ENCODE measurements at regions of chr18 and their contacts with region 1.

Region 1: GRCh38 chr18:53380063-53380639 is 844.3 kb downstream of the MBD2 start:
- DNase-seq: peak; percentile 77
- H3K4me3 ChIP-seq: no peak overlapping the region
- H3K27ac ChIP-seq: no peak overlapping the region
- H3K4me1 ChIP-seq: peaks cover 7% of the 10 kb centered on the region
- H3K27me3 ChIP-seq: no peaks in the 10 kb centered on the region
- CTCF ChIP-seq: peak; percentile 77

Region 2: DNA sequence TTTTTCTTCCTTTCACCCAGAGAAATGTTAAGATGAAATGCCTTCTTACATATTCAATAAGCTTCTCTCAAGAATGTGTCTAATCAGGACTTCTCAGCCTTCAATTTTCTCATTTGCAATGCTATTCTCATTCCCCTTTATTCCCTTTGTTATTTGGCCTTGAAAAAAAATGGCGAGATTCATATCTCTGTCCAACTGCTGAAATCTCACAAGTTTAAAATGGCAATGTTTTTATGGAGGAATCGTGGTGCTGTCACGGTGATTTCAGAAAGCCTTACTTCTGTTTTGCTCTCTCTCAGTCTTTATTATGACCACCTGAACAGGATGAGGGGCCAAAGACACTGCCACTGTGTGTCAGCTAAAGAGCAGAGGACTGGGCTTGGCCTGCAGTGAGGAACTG is 111.7 kb before region 1 on chr18:
- CTCF ChIA-PET with region 1: no interaction called
- POLR2A ChIA-PET with region 1: interaction called, 15 read pairs
- intact Hi-C with region 1: no loop called
- DNase-seq: peak; percentile 16
- H3K4me3 ChIP-seq: no peak overlapping the region
- H3K27ac ChIP-seq: no peak overlapping the region
- H3K4me1 ChIP-seq: no peaks in the 10 kb centered on the region
- H3K27me3 ChIP-seq: no peaks in the 10 kb centered on the region
- CTCF ChIP-seq: no peak

Region 3: DNA sequence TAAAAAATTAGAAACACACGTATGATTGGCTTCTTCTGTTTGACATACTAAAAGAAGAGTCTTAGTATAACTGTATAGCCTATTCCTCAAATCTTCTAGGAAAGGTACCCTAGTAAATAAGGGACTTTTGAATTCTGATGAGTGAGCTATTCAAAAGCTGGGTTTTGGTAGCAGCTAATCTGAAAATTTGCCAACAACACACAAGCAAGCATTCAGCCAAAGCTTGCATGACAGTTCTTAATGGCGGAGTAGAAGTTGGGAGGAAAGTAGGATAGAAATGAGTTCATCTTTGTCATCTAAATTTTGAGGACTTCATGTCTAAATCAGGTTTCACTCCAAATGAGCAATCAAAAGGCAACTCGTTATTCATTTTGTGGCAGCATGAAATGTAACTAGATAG is 31.4 kb after region 1 on chr18:
- CTCF ChIA-PET with region 1: no interaction called
- POLR2A ChIA-PET with region 1: no interaction called
- intact Hi-C with region 1: no loop called
- DNase-seq: no peak
- H3K4me3 ChIP-seq: no peak overlapping the region
- H3K27ac ChIP-seq: no peak overlapping the region
- H3K4me1 ChIP-seq: peaks cover 9% of the 10 kb centered on the region
- H3K27me3 ChIP-seq: no peaks in the 10 kb centered on the region
- CTCF ChIP-seq: no peak

Region 4: DNA sequence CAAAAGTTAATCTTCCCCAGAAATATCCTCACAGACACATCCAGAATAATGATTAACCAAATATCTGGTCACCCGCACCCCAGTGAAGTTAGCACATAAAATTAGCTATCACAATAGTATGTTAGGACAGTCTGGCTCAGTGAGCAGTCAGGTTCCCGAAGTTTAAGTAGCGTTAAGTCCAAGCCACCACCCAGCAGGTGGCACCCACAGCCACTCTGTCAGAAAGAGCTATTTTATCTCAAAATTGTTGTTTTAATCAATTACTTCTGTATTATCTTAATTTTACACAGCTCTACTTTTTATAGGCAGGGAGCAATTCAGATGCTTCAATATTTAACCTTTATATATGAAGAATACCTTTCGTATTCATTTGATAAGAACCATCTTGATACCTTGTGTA is 306.9 kb after region 1 on chr18:
- CTCF ChIA-PET with region 1: no interaction called
- POLR2A ChIA-PET with region 1: no interaction called
- intact Hi-C with region 1: no loop called
- DNase-seq: no peak
- H3K4me3 ChIP-seq: no peak overlapping the region
- H3K27ac ChIP-seq: no peak overlapping the region
- H3K4me1 ChIP-seq: no peaks in the 10 kb centered on the region
- H3K27me3 ChIP-seq: peaks cover 6% of the 10 kb centered on the region
- CTCF ChIP-seq: no peak; the same call in 1 of the 2 replicates